ENCODE measurements at regions of chr11 and their contacts with region 1.

Region 1: DNA sequence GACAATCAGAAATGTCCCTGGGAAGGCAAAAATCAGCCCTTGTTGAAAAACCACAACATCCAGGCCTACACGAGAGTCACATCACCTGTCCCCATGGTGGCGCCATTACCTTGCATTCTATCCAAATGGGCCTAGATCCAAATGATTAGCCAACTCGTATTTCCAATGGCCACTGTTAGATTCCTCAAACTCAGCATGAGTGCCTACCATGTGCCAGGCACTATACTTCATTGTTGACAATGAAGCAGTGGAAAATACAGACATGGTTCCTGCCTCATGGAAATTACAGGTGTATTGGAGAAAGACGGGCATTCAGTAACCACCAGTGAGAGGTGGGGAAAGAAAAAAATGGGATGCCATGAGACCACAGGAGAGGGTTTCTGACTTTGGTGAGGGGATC is 29.8 kb upstream of the CREB3L1 start:
- DNase-seq: peak; percentile 78
- H3K4me3 ChIP-seq: no peak overlapping the region
- H3K27ac ChIP-seq: no peak overlapping the region
- H3K4me1 ChIP-seq: peaks cover 15% of the 10 kb centered on the region
- H3K27me3 ChIP-seq: no peaks in the 10 kb centered on the region
- CTCF ChIP-seq: no peak

Region 2: GRCh38 chr11:46315033-46315738 is 67.5 kb after region 1 on chr11:
- intact Hi-C with region 1: loop called (anchors 2 kb)
- DNase-seq: peak; percentile 84
- H3K4me3 ChIP-seq: no peak overlapping the region
- H3K27ac ChIP-seq: no peak overlapping the region
- H3K4me1 ChIP-seq: no peaks in the 10 kb centered on the region
- H3K27me3 ChIP-seq: no peaks in the 10 kb centered on the region
- CTCF ChIP-seq: peak; percentile 88

Region 3: DNA sequence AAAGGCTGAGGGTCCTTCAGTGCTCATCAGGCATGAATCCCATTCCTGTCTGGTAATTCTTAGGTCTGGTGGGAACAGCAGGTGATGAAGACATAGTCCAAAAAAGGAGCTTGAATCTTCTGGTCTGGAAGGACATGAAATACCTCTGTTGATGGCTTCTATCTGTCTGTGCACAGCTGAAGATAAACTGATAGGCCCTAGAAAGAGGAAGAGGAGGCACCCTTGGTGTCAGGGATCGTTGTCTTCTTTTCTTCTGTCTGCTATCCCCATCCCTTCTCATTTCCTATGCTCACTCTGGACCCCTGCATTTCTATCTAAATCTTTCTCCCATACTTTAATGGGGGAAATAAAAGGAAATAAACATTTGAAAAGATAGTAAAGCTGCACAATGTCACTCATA is 1458.1 kb after region 1 on chr11:
- intact Hi-C with region 1: no loop called
- DNase-seq: no peak
- H3K4me3 ChIP-seq: no peak overlapping the region
- H3K27ac ChIP-seq: no peak overlapping the region
- H3K4me1 ChIP-seq: no peaks in the 10 kb centered on the region
- H3K27me3 ChIP-seq: no peaks in the 10 kb centered on the region
- CTCF ChIP-seq: no peak

Measured in colonic mucosa (tissue), 4 donors.